Caco-2 (cell line): ENCODE measurements at regions of chr15 and their contacts with region 1.

Region 1: GRCh38 chr15:100508641-100509300 is 20.0 kb downstream of the CERS3 start:
- DNase-seq: no peak
- H3K4me3 ChIP-seq: no peak overlapping the region
- H3K4me3 Mint-ChIP-seq: no peak overlapping the region
- H3K27ac Mint-ChIP-seq: no peak overlapping the region
- H3K4me1 ChIP-seq: no peaks in the 10 kb centered on the region
- H3K4me1 Mint-ChIP-seq: no peaks in the 10 kb centered on the region
- H3K27me3 ChIP-seq: no peaks in the 10 kb centered on the region
- H3K27me3 Mint-ChIP-seq: peaks cover 14% of the 10 kb centered on the region
- CTCF ChIP-seq: no peak

Region 2: GRCh38 chr15:100022391-100022790 is 486.4 kb before region 1 on chr15:
- CTCF ChIA-PET with region 1: interaction called, 10 read pairs
- POLR2A ChIA-PET with region 1: no interaction called
- intact Hi-C with region 1: no loop called
- DNase-seq: no peak
- H3K4me3 ChIP-seq: no peak overlapping the region
- H3K4me3 Mint-ChIP-seq: no peak overlapping the region
- H3K27ac Mint-ChIP-seq: no peak overlapping the region
- H3K4me1 ChIP-seq: no peaks in the 10 kb centered on the region
- H3K4me1 Mint-ChIP-seq: no peaks in the 10 kb centered on the region
- H3K27me3 ChIP-seq: no peaks in the 10 kb centered on the region
- H3K27me3 Mint-ChIP-seq: no peaks in the 10 kb centered on the region
- CTCF ChIP-seq: no peak

Region 3: DNA sequence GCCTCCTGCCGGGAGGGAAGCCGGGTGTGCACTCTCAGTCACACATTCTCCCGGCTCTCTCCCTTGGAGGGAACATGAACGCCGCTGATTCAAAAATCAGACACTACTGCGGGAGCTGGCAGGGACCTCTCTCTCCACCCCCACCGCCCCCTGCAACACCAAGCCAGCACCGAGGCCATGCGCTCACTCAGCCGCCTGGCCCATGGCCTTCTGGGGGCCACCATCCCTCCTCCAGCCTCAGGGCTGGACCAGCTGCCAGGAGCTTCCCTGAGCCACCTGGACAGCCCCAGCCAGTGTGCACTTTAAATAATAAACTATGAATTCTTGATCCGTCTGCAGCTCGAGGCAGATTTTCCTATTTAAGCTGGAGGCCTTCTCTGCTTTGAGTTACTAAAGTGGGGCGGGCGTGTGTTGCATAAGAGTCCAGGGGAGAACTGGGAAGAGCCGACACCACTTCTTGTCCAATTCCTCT is 197.6 kb before region 1 on chr15:
- CTCF ChIA-PET with region 1: no interaction called
- POLR2A ChIA-PET with region 1: no interaction called
- intact Hi-C with region 1: no loop called
- DNase-seq: no peak
- H3K4me3 ChIP-seq: no peak overlapping the region
- H3K4me3 Mint-ChIP-seq: no peak overlapping the region
- H3K27ac Mint-ChIP-seq: no peak overlapping the region
- H3K4me1 ChIP-seq: no peaks in the 10 kb centered on the region
- H3K4me1 Mint-ChIP-seq: no peaks in the 10 kb centered on the region
- H3K27me3 ChIP-seq: no peaks in the 10 kb centered on the region
- H3K27me3 Mint-ChIP-seq: peaks cover 7% of the 10 kb centered on the region
- CTCF ChIP-seq: no peak

Region 4: DNA sequence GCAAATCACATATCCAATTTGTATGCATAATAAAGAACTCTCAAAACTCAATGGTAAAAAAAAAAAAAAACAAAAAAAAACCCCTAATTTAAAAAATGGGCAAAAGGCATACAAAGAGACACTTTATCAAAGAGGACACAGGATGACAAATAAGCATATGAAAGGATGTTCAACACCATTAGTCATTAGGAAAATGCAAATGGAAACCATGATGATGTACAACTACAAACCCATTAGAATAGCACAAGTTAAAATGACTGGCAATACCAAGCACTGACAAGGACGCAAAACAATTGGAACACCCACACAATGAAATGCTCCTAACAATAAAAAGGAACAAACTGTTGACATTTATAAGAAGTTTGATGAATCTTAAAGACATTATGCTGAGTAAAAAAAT is 103.6 kb before region 1 on chr15:
- CTCF ChIA-PET with region 1: no interaction called
- POLR2A ChIA-PET with region 1: no interaction called
- intact Hi-C with region 1: no loop called
- DNase-seq: no peak
- H3K4me3 ChIP-seq: no peak overlapping the region
- H3K4me3 Mint-ChIP-seq: no peak overlapping the region
- H3K27ac Mint-ChIP-seq: no peak overlapping the region
- H3K4me1 ChIP-seq: no peaks in the 10 kb centered on the region
- H3K4me1 Mint-ChIP-seq: no peaks in the 10 kb centered on the region
- H3K27me3 ChIP-seq: no peaks in the 10 kb centered on the region
- H3K27me3 Mint-ChIP-seq: no peaks in the 10 kb centered on the region
- CTCF ChIP-seq: no peak